Cardiac septum (tissue), 1 donor: ENCODE measurements at regions of chr2 and their contacts with region 1.

Region 1: DNA sequence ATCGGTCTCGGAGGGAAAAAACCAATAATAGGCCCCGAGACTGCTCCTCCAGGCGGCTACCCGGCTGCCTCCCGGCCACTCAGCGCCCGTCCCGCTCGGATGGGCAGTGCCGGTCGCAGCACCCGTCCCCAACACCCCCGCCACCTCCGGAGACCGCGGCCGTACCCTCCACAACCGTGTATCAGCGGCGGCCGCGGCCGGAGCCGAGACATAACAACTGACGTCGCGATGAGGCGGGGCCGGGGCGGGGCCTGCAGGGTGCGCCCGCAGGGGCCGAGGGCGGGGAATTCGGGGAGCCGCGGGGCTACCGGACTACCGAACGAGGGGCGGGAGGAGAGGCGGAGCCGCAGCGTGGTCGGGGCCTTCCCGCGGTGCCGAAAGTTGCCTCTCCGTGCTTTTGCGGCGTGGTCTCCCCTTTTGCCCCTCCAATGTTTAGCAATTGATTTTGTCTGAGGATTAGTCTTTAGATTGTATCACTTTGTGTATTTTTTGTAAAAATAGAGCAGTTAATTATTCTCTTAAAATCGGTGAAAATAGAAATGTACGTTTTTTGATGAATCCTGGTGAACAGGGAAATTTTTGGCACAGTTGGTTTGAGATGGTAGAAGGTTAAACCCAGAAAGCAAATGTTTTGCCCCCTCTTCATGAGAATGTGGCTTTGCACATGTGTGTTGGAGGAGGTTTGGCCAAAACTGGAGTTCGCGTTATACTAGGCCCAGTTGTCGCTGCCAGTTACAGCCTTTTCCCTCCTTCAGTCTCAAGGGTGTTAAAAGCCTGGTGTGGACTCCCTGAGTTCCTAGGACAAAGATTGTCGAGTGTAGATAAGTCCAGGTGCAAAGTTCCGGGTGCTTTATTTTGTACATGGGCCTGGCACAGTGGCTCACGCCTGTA is at the start of gene RNF103:
- DNase-seq: peak; percentile 99
- total RNA-seq, gene RNF103: 63.4 TPM

Region 2: DNA sequence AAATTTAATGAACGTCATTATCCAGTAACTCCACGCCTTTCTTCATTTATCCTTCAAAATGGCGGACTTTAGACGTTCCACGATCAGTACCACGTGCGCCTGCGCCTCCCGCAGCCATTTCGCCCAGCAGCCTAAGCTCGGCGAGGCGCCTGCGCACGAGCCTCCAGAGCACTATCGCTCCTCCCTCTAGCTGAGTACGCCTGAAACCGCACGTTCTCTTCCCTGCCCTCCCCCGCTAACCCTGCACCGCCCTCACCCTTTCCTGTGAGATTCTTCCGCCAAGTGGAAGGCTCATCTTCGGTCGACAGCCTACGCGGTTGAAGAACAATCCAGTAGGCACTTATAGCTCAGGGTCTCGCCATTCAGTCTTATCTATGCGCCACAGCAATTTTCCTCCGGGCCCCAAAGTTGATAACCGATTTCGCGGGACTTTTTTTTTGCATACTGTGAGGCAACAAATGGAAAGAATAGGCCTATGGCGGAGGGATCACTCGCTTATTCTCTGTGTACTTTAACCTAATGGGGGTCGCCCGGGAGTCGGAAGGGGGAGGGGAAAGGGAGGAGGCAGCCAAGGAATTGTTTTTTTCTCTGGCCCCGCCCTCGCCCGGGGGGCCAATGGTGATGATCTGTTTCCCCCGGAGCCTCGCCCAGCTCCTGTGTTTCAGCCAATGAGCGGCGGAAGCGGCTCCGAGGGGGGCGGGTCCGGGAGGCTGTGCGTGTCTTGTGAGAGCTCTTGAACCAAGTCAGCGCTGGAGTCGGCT is 183.1 kb before region 1 on chr2 and contains the start of gene KDM3A:
- intact Hi-C with region 1: loop called (anchors 2 kb)
- DNase-seq: peak; percentile 100
- total RNA-seq, gene KDM3A: 41.6 TPM

Region 3: GRCh38 chr2:86518481-86518880 is 105.4 kb before region 1 on chr2:
- intact Hi-C with region 1: loop called (anchors 5 kb)
- DNase-seq: no peak

Region 4: DNA sequence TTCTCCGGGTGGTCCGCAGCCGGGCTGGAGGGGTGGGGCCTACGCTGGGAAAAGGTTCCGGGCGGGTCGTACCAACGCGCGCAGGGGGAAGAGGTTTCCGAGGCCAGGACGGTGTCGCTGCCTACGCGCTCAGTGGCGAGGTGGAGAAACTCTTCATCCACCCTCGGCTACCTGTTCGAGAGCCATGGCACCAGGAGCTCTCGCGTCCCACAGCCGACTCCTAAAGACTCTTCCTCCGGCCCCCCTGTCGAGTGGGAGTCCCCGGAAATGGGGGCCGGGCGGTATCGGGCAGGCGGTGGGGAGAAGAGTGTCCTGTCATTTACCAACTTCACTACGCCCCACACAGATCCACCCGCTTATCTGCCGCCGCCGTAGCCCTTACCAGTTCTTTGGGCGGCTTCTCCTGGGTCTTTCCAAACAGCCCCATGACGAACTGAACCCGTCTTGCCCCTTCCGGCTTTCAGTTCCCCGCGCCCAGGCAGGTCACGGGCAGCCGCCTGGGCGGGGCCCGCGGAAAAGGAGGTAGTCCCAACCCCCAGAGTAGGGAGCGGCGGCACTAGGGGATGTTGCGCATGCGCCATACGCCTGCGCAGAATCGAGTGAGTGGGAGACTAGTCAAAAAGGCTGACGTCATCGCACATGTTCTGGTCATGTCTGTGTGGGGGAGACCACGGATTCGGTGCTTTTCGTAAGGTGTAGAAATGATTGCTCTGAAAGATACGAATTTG is 60.8 kb before region 1 on chr2 and contains the start of gene CHMP3:
- intact Hi-C with region 1: loop called (anchors 1 kb)
- DNase-seq: peak; percentile 99
- total RNA-seq, gene CHMP3: 175 TPM

Region 5: DNA sequence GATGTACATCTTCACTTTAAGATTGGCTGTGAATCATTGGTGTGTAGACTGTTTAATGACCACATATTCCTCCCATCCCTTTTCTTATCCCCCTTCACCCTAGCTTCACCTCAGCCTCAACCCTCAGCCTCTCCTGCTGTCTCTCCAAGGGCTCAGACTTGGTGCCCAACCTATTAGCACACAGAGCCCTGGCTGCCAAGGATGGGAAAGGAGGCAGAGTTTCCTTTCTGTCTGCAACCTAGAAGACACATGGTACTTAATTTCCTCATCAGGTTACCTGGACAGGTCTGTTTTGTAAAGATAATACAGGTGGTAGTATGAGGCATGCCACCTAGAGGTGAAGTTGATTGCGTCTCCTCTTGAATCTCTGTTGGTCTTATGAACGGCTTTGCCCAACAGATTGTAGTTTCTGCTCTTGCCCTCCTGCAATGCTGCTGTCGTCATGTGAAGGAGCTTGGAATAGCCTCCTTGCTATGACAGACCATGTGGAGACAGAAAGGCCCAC is 51.7 kb after region 1 on chr2:
- intact Hi-C with region 1: loop called (anchors 10 kb)
- DNase-seq: no peak

Region 6: DNA sequence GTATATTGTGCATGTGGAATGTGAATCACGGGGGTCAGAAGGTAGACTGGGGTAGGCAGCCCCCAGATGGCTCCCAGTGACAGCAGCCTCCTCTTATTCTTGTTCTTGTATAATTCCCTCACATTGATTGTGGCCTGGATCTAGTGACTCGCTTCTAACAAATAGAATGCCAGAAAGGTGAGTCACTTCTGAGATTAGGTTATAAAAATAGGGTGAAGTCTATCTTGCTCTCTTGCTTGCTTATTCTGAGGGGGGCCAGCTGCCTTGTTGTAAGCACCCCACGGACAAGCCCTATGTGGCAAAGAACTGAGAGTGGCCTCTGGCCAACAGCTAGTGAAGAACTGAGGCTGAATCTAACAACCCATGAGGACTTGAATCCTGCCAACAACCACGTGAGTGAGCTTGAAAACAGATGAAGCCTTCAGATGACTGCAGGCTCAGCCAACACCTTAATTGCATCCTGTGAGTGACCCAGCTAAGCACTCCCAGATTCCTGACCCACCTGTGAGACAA is 80.6 kb after region 1 on chr2:
- intact Hi-C with region 1: loop called (anchors 1 kb)
- DNase-seq: peak; percentile 78